ENCODE measurements at regions of chr12 and their contacts with region 1.

Region 1: DNA sequence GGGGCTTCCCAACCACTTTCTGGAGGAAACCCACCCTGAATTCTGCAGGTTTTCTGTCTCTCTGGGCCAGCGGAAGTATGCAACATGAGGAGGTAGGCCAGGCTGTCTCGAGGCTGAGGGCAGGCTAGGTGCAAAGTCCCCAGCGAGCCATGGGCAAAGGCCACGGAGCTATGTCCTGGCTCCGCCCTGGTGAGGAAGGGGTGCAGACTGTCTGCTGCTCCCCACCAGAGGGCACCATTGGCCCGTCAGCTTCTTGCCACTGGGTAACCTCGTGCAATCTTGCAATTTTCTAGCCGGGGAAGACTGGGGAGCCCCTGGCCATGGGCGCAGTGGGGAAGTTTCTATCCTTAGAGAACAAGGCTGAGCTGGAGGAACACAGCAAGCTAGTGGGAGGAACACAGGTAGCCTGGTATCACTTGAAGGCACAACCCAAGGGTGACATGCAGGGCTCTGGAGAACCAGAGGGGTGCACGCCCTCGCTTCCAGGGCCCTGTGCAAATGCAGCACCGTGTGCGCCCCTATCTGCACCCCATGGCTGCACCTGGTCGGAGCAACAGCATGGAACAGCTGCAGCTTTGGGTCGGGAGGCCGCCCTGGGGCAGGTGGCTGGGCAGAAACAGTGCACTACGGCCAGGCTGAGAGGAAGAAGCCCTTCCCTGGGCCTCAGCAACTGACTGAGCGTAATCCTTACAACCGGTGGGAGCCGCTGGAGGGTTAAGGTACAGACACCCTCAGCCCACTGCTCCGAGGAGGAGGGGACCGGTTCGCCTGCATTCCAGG is 27.6 kb upstream of the RPLP0 start:
- DNase-seq: peak; percentile 30
- H3K4me3 ChIP-seq: peak overlapping the region in 1 of 4 donors; percentile 25
- H3K27ac ChIP-seq: peak overlapping the region; percentile 74 to 94 (median 84)
- H3K4me1 ChIP-seq: peaks cover 72 to 98% (median 88%) of the 10 kb centered on the region in 3 donors
- H3K27me3 ChIP-seq: no peaks in the 10 kb centered on the region
- CTCF ChIP-seq: peak; percentile 84 to 97 (median 94)
- POLR2A ChIP-seq: no peak

Region 2: DNA sequence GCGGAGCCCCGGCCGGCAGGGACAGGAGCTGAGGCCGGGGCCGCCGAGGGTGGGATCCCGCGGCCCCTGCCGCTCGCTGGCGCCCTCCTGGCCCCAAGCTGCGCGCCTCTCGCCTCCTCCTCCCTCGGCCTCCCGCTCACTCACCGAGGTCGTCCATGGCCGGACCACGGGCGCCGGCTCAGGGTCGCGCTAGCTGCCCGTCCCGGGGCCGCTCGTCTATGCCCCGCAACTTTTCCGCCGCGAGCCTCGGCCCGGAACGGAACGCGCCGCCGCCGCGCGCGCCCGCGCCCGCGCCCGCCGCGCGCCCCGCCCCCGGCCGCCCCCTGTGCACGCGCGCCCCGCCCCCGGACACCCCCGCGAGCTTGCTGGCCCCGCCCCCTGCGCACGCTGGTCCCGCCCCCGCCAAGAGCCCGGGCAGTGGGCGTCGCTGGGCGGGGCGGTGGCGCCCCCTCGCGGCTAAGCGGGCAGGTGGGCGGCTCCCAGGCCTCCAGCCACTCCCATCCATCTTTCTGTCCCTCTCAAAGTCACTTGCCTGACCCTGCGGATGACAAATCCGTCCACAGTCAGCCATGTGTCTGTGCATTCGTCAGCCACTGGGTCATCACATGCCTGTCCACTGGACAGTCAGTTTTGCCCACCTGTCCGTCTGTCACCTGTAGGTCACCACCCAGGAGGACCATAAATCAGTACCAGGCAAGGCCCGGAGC is 37.1 kb after region 1 on chr12 and contains the start of gene PXN:
- intact Hi-C with region 1: loop called (anchors 2 kb)
- DNase-seq: peak; percentile 54
- H3K4me3 ChIP-seq: peak within 1 kb of the TSS; percentile 84 to 98 (median 92)
- H3K27ac ChIP-seq: peak within 1 kb of the TSS; percentile 89 to 95 (median 92)
- H3K4me1 ChIP-seq: peaks cover 29 to 56% (median 39%) of the 10 kb centered on the region in 3 donors
- H3K27me3 ChIP-seq: no peaks in the 10 kb centered on the region
- CTCF ChIP-seq: peak; percentile 73 to 88 (median 86)
- POLR2A ChIP-seq: peak in 2 of 4 donors; percentile 71 to 82
- total RNA-seq, gene PXN: 18.2 to 44.4 (median 21.4) TPM

Measured in esophagus squamous epithelium (tissue), 5 donors.